Activated CD4-positive, alpha-beta T cell treated with anti-CD3 and anti-CD28 coated beads, Interleukin-2, amount 10 ng/mL, durations not matched to agents 24 days and 14 days (primary cell): ENCODE measurements at regions of chr17 and their contacts with region 1.

Region 1: GRCh38 chr17:76240461-76241203 is at the start of gene RNF157:
- DNase-seq: peak; percentile 94
- H3K4me3 Mint-ChIP-seq: peak within 1 kb of the TSS; percentile 94
- H3K27ac Mint-ChIP-seq: peak within 1 kb of the TSS; percentile 90
- H3K4me1 Mint-ChIP-seq: peaks cover 57% of the 10 kb centered on the region
- H3K27me3 Mint-ChIP-seq: no peaks in the 10 kb centered on the region
- total RNA-seq, gene RNF157: 35.0 and 42.4 TPM in 2 replicates

Region 2: DNA sequence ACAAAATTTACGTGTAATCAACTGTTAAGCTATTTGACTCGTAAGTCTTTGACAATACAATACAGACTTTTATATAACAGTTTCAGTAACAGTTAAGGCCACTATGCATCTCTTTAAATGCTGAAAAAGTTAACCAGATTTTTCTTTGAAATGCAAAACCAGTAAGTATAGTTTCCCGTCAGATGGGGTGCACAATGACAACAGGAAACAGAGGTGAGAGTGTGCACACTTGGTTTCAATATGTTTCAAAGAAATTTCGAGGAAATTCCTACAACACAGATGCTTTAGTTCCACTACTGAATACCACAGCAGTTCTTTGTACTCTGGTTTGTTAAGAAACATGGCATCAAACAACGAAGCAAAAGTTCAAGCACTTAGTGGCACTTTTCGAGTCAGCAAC is 48.7 kb before region 1 on chr17:
- intact Hi-C with region 1: no loop called
- DNase-seq: peak; percentile 90
- H3K4me3 Mint-ChIP-seq: peak overlapping the region; percentile 68
- H3K27ac Mint-ChIP-seq: peak overlapping the region; percentile 89
- H3K4me1 Mint-ChIP-seq: peaks cover 68% of the 10 kb centered on the region
- H3K27me3 Mint-ChIP-seq: no peaks in the 10 kb centered on the region

Region 3: DNA sequence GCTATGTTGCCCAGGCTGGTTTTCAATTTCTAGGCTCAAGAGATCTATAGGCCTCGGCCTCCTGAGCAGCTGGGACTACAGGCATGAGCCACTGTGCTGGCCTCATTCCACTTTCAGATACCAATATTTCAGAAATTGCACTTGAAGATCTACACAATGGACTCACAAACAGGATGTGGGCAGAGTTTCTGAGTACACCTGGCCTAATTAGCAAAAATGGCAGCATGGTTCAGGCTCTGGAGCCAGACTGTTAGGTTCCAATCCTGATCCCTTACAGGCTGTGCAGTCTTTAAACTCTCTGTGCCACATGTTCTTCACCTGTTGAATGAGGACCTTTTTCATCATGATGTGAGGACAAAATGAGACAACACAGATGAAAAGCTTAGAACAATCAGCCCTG is 32.5 kb before region 1 on chr17:
- intact Hi-C with region 1: loop called (anchors 2 kb)
- DNase-seq: no peak
- H3K4me3 Mint-ChIP-seq: no peak overlapping the region
- H3K27ac Mint-ChIP-seq: peak overlapping the region; percentile 59
- H3K4me1 Mint-ChIP-seq: peaks cover 53% of the 10 kb centered on the region
- H3K27me3 Mint-ChIP-seq: no peaks in the 10 kb centered on the region

Region 4: DNA sequence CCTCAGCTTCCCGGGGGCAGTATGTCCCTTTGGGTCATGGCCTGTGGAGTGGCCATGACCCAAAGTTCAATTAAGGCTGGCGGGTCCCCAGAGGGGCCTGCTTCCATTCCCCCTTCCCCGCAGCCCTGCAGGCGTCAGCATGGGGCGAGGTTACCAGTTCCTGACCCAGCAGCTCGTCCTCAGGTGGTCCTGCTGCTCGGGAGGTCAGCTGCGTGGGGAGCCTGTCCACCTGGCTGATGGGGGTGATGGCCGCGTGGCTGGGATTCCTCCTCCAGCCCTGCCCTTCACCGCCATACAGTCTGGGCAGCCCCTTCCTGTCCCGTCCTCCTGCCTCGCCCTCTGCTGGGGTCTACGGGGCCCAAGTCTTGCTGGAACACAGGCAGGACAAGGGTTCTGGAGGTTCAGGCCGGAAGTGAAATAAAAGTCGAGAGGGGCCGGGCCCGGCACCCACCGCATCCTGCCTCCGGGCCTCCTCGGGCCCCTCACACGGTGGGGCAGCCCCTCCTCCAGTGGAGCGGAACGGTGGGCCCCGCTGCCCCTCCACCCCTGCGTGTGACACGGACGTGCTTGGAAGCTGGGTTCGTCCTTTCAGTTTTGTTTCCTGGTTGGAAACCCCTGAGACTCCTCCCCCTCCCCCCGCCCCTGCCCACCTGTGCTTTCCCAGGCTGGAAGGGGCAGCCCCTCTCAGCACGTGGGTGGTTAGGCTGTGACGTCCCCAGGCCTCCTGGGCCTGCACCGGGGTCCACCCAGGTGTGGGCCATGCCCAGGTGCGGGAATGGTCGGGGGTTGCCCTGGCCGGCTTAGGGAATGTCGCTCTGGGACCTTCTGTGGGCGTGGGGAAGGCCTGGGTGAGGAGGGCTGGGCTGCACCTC is 31.3 kb after region 1 on chr17:
- intact Hi-C with region 1: no loop called
- DNase-seq: peak; percentile 92
- H3K4me3 Mint-ChIP-seq: peak overlapping the region; percentile 83
- H3K27ac Mint-ChIP-seq: peak overlapping the region; percentile 96
- H3K4me1 Mint-ChIP-seq: peaks cover 51% of the 10 kb centered on the region
- H3K27me3 Mint-ChIP-seq: no peaks in the 10 kb centered on the region